Activated naive CD4-positive, alpha-beta T cell treated with anti-CD3 and anti-CD28 coated beads for 36 hours (primary cell): ENCODE measurements at regions of chr14 and their contacts with region 1.

Region 1: GRCh38 chr14:32252030-32252670 is 49.1 kb upstream of the RNU6-8 start:
- DNase-seq: peak; percentile 64
- H3K4me3 Mint-ChIP-seq: no peak overlapping the region
- H3K27ac Mint-ChIP-seq: no peak overlapping the region
- H3K4me1 Mint-ChIP-seq: no peaks in the 10 kb centered on the region
- H3K27me3 Mint-ChIP-seq: no peaks in the 10 kb centered on the region

Region 2: DNA sequence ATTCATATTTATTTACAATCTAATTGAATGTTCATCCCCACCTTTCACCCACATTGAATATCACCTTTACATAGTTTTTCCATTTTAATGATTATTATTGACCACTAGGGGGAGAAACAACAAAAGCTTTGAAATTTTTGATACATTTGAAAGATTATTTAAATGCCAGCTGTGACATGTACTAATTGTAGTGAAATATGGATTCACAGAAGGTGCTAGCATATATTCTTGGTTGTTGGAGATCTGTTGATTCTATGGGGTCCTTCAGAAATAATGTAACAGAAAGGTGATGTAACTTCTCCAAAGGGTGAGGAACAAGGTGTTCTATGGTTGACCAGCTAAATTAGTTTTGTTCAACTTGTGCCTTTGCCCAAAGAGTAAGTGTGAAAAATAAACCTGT is 741.9 kb before region 1 on chr14:
- CTCF ChIA-PET with region 1: interaction called, 10 read pairs
- intact Hi-C with region 1: loop called (anchors 1 kb)
- DNase-seq: no peak
- H3K4me3 Mint-ChIP-seq: no peak overlapping the region
- H3K27ac Mint-ChIP-seq: no peak overlapping the region
- H3K4me1 Mint-ChIP-seq: no peaks in the 10 kb centered on the region
- H3K27me3 Mint-ChIP-seq: no peaks in the 10 kb centered on the region

Region 3: DNA sequence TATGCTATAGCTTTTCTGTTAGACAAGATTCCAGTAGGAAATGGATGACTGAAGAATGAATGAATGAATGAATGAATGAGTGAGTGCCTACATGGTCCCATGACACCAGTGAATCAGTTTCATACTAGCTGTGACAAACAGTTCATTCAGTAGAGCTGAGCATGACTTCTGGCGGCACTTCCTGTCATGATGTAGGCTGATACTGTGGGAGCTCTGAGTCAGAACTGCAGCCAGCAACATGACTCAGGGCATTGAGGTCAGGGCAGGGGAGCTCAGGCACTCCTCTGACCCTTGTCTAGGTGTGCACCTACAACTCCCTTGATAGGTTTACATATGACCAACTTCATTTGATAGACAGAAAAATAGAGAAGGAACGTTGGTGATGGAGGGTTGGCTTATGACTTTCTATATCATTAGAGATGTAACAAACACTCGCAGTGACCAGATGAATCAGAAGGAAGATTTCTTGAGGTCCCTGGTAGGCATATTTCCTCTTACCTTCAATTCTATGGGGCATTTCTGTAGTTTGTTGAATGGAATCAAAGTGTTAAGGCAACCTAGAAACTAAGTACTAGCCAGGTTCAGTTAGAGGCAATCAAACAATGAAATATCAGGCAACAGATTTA is 314.3 kb before region 1 on chr14:
- CTCF ChIA-PET with region 1: interaction called, 12 read pairs
- intact Hi-C with region 1: loop called (anchors 1 kb)
- DNase-seq: peak; percentile 89
- H3K4me3 Mint-ChIP-seq: no peak overlapping the region
- H3K27ac Mint-ChIP-seq: peak overlapping the region; percentile 20
- H3K4me1 Mint-ChIP-seq: peaks cover 20% of the 10 kb centered on the region
- H3K27me3 Mint-ChIP-seq: no peaks in the 10 kb centered on the region

Region 4: DNA sequence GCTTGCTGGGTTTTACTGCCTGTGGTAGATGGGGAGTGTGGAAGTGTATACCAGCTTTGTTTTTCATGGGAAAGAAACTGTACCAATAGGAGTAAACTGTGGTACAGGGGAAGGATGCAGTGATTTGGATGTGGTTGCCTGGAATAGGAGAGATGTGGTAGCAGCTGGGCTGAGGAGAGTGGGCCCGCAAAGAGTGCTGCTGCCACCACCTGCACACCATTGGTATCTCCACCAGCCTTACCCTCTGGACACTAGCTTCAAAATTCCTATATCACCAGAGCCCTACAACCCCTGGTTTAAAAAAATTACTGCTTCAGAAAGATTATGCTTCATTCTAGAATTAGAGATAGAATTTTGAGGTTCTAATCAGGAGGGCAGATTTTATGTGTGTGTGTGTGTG is 130.6 kb after region 1 on chr14:
- CTCF ChIA-PET with region 1: no interaction called
- intact Hi-C with region 1: loop called (anchors 1 kb)
- DNase-seq: no peak
- H3K4me3 Mint-ChIP-seq: no peak overlapping the region
- H3K27ac Mint-ChIP-seq: no peak overlapping the region
- H3K4me1 Mint-ChIP-seq: peaks cover 19% of the 10 kb centered on the region
- H3K27me3 Mint-ChIP-seq: no peaks in the 10 kb centered on the region

Region 5: DNA sequence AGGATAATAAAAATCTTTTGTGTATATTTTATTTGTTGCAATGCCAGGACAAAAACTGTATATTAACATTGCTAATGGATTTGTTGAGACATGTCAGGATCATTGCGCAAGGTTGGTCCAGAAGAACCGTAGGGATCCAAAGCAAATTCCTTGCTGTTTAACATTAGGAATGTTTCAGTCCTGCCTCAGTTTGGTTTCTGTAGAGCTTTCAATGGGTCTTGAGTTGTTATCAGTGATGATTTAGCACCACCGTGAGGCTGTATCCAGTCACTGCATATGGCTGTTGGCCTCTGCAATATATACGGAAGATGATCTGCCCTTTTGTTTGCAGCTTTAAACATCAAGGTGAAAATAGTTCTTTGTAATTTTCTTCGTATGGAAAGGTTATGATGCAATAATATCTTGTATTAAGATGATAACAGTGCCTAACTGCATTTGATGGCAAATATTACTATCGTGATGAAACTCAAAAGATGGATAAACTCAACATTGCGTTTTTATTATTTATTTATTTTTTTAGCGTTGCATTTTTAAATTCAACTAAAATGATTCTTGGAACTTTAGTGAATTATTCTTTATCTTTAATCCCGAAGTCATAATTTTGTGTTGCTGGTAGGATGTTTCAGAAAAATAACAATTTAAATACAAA is 308.2 kb after region 1 on chr14:
- CTCF ChIA-PET with region 1: interaction called, 7 read pairs
- intact Hi-C with region 1: loop called (anchors 1 kb)
- DNase-seq: peak; percentile 64
- H3K4me3 Mint-ChIP-seq: no peak overlapping the region
- H3K27ac Mint-ChIP-seq: no peak overlapping the region
- H3K4me1 Mint-ChIP-seq: peaks cover 12% of the 10 kb centered on the region
- H3K27me3 Mint-ChIP-seq: no peaks in the 10 kb centered on the region

Region 6: DNA sequence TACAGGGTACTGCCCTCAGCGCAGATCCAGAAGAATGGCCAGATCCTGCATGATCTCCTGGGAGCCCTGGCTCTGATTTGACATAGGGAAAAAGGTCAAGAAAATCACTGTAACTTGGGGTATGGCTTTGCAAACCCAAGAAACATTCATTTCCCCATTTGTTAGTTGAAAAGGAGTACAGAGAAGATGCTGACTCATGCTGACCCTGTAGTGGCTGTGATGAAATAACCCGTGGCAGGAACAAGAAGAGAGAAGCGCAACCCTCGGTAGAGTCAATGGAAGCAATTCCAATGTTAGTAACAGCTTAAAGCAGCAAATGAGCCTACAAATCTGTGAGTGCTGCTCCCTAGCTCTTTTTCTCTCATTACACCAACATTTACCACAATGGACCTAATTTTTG is 404.9 kb after region 1 on chr14:
- CTCF ChIA-PET with region 1: no interaction called
- intact Hi-C with region 1: no loop called
- DNase-seq: peak; percentile 7
- H3K4me3 Mint-ChIP-seq: no peak overlapping the region
- H3K27ac Mint-ChIP-seq: no peak overlapping the region
- H3K4me1 Mint-ChIP-seq: no peaks in the 10 kb centered on the region
- H3K27me3 Mint-ChIP-seq: no peaks in the 10 kb centered on the region